Activated naive CD4-positive, alpha-beta T cell treated with anti-CD3 and anti-CD28 coated beads, Interleukin-2, amount 10 ng/mL, durations not matched to agents 7 days and 5 days (primary cell): ENCODE measurements at regions of chr1 and their contacts with region 1.

Region 1: DNA sequence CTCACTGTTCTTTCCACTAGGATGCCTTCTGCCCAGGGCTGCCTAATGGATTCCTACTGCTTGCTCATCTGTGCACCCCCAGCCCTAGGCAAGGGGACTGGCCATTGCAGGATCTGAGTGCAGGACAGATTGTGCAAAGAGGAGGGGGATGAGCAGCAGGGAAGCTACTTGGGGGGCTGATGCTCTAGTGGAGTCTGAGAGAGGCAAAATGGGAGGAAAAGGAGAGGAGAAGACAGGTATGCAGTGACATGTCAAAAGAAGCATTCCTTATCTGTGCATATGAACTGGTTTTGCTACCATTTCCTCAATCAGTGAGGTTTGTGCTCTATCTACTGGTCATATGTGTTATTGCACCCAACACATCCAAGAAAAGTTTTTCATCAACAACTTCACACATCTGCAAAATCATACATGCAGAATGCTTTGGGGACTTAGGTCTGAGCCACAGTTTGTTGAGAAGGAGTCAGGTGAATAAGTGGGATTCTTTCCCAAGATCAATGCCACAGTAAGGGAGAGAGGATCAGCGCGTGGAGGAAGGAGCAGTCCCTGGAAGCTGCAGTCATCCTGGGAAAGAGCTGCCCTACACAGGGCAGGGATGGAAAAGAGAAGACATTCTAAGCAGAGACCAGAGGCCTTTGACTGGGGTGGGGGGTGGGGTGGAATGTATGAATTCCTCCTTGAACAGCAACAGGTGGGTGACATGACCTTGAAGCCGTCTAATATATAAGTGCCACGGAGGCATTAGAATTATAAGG is 14.4 kb downstream of the SLC5A9 start:
- DNase-seq: no peak
- H3K4me3 Mint-ChIP-seq: no peak overlapping the region
- H3K27ac Mint-ChIP-seq: no peak overlapping the region
- H3K4me1 Mint-ChIP-seq: no peaks in the 10 kb centered on the region
- H3K27me3 Mint-ChIP-seq: peaks cover 14% of the 10 kb centered on the region

Region 2: GRCh38 chr1:48093696-48094528 is 143.0 kb before region 1 on chr1:
- CTCF ChIA-PET with region 1: interaction called, 16 read pairs
- DNase-seq: peak; percentile 85
- H3K4me3 Mint-ChIP-seq: no peak overlapping the region
- H3K27ac Mint-ChIP-seq: no peak overlapping the region
- H3K4me1 Mint-ChIP-seq: peaks cover 7% of the 10 kb centered on the region
- H3K27me3 Mint-ChIP-seq: peaks cover 28% of the 10 kb centered on the region

Region 3: DNA sequence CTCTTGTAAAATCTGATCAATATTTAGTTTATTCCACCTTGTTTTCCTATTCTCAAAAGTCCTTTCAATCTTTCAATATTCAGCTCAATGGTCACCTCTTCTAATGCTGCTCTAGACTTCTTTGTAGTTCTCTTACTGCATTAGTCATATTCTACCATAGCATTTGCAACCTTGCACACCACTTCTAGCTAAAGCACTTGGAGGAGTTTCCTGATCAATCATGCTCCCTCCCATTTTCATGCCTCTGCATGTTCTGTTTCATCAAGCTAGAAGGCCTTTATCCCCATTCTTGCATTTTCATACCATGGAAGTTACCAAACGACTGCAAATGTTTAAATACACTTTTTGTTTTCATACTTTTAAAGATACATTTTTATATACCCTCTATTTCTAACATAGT is 57.8 kb after region 1 on chr1:
- CTCF ChIA-PET with region 1: no interaction called
- DNase-seq: no peak
- H3K4me3 Mint-ChIP-seq: no peak overlapping the region
- H3K27ac Mint-ChIP-seq: no peak overlapping the region
- H3K4me1 Mint-ChIP-seq: no peaks in the 10 kb centered on the region
- H3K27me3 Mint-ChIP-seq: no peaks in the 10 kb centered on the region